Right ventricle myocardium superior (tissue), 1 donor: ENCODE measurements at regions of chr1 and their contacts with region 1.

Region 1: GRCh38 chr1:64469977-64470664 is at the start of gene CACHD1:
- DNase-seq: peak; percentile 89
- ATAC-seq: peak; percentile 88
- total RNA-seq, gene CACHD1: 4.2 TPM

Region 2: GRCh38 chr1:64121766-64122385 is 348.2 kb before region 1 on chr1:
- intact Hi-C with region 1: no loop called
- DNase-seq: no peak
- ATAC-seq: no peak

Region 3: GRCh38 chr1:64539781-64540218 is 69.7 kb after region 1 on chr1:
- intact Hi-C with region 1: loop called (anchors 10 kb)
- DNase-seq: peak; percentile 84
- ATAC-seq: peak; percentile 72

Region 4: GRCh38 chr1:64663668-64664067 is 193.5 kb after region 1 on chr1:
- intact Hi-C with region 1: loop called (anchors 10 kb)
- DNase-seq: no peak
- ATAC-seq: no peak